Psoas muscle (tissue), 8 donors: ENCODE measurements at regions of chr1 and their contacts with region 1.

Region 1: GRCh38 chr1:54406339-54407153 is at the start of gene SSBP3:
- DNase-seq: peak; percentile 93 to 96
- ATAC-seq: peak; percentile 84 to 88 (median 86)
- H3K4me3 ChIP-seq: peak within 1 kb of the TSS; percentile 91
- H3K27ac ChIP-seq: peak within 1 kb of the TSS; percentile 89
- H3K4me1 ChIP-seq: peaks cover 54% of the 10 kb centered on the region
- H3K27me3 ChIP-seq: no peaks in the 10 kb centered on the region
- CTCF ChIP-seq: no peak
- total RNA-seq, gene SSBP3: 13.8 to 24.2 (median 22.0) TPM

Region 2: DNA sequence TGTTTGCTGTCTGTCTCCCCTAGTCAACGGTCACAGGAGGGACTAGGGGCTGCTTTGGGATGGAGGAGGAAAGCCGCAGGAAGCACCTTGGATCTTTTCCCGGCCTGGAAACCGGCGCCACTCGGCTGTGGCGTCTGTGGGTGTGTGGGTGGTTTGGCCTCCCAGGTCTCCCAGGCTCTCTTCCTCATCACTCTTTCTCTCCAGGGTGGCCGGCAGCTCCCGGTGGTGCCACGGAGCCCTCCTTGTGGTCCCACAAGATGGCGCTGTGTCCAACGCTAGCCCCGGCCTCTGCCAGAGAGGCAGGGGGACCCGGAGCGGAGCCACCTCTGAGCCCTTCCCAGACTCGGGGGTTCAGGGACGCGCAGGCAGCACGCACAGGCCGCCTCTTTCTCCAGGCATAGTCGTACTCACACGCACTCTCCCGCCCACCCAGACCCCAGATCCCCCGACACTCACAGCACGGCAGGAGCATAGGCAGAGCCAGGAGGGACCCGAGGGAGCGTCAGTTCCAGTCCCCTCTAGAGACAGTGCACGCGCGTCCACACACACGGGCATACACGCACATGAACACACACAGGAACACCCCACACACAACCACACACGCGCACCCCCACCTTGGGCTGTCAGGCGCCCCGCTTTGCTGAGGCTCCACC is 284.9 kb before region 1 on chr1:
- intact Hi-C with region 1: loop called (anchors 5 kb)
- DNase-seq: peak; percentile 77 to 89
- ATAC-seq: peak; percentile 71 to 85 (median 76)
- H3K4me3 ChIP-seq: peak overlapping the region; percentile 57
- H3K27ac ChIP-seq: no peak overlapping the region
- H3K4me1 ChIP-seq: peaks cover 9% of the 10 kb centered on the region
- H3K27me3 ChIP-seq: no peaks in the 10 kb centered on the region
- CTCF ChIP-seq: peak; percentile 76

Region 3: GRCh38 chr1:54199765-54200518 is 206.6 kb before region 1 on chr1 and contains the starts of genes CYB5RL and MRPL37:
- intact Hi-C with region 1: loop called in 1 of 2 experiments (anchors 5 kb)
- DNase-seq: peak; percentile 88 to 93
- ATAC-seq: peak; percentile 96 to 100 (median 99)
- H3K4me3 ChIP-seq: peak within 1 kb of the TSS; percentile 79
- H3K27ac ChIP-seq: peak within 1 kb of the TSS; percentile 80
- H3K4me1 ChIP-seq: peaks cover 20% of the 10 kb centered on the region
- H3K27me3 ChIP-seq: no peaks in the 10 kb centered on the region
- CTCF ChIP-seq: no peak
- total RNA-seq, gene CYB5RL: 2.8 to 6.4 (median 3.3) TPM
- total RNA-seq, gene MRPL37: 89.6 to 109 (median 102) TPM

Region 4: DNA sequence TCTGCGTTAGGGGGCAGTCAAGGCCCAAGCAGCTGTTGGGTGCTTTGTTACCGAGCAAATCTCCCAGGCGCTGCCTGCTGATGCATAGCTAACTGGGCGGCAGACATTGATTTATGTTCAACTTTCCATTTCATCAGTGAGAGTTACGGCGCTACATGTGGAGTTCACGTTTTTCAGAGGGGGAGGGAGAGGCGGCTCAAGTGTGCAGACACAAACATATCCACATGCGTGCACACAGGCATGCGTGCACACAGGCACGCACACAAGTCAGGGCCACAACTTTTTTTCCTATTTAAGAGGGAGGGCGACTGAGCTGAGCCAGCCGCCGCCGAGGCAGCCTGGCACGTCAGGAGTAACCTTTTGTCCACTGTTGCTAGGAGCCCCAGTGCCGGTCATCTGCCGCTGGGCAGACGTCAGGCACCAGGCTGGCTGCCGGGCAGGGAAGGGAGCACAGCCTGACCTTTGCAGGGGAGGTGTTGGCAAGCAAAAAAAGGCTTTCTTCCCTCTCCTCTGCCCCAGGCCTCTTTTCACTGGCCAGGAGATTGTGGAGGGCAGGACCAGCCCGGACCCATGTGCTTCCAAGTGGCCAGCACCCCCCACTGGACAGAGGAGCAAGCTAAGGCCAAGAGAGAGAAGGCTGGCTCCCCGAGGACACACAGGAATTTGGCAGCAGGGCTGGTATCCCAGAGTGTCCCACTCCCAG is 133.3 kb before region 1 on chr1:
- intact Hi-C with region 1: loop called (anchors 2 to 5 kb)
- DNase-seq: peak; percentile 78 to 91
- ATAC-seq: peak; percentile 87 to 89 (median 88)
- H3K4me3 ChIP-seq: peak overlapping the region; percentile 56
- H3K27ac ChIP-seq: peak overlapping the region; percentile 87
- H3K4me1 ChIP-seq: peaks cover 84% of the 10 kb centered on the region
- H3K27me3 ChIP-seq: no peaks in the 10 kb centered on the region
- CTCF ChIP-seq: peak; percentile 57

Region 5: GRCh38 chr1:54310439-54311328 is 95.9 kb before region 1 on chr1:
- intact Hi-C with region 1: loop called in 1 of 2 experiments (anchors 5 kb)
- DNase-seq: peak in 1 of 2 donors; percentile 74
- ATAC-seq: peak; percentile 55 to 77 (median 70)
- H3K4me3 ChIP-seq: no peak overlapping the region
- H3K27ac ChIP-seq: peak overlapping the region; percentile 53
- H3K4me1 ChIP-seq: peaks cover 58% of the 10 kb centered on the region
- H3K27me3 ChIP-seq: no peaks in the 10 kb centered on the region
- CTCF ChIP-seq: peak; percentile 51

Region 6: DNA sequence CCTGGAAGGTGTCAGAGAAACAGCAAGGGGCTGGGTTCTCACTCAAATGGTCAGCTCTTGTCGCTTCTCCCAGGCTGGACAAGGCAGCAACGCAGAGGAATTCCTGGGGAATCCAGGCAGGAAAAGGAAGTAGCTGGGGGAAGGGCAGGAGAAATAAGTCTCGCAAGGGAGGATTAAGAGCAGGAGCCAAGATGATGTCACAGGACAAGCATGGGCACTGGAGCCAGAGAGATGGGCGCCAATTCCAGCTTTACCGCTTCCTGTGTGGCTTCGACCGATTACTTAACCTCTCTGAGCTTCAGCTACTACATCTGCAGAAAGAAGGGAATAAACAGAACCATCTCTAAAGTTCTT is 70.8 kb before region 1 on chr1:
- intact Hi-C with region 1: loop called in 1 of 2 experiments (anchors 5 kb)
- DNase-seq: peak; percentile 67 to 84
- ATAC-seq: peak; percentile 74 to 80 (median 76)
- H3K4me3 ChIP-seq: peak overlapping the region; percentile 55
- H3K27ac ChIP-seq: peak overlapping the region; percentile 93
- H3K4me1 ChIP-seq: peaks cover 86% of the 10 kb centered on the region
- H3K27me3 ChIP-seq: no peaks in the 10 kb centered on the region
- CTCF ChIP-seq: no peak

Region 7: GRCh38 chr1:54488779-54489626 is 82.5 kb after region 1 on chr1:
- intact Hi-C with region 1: loop called (anchors 1 kb)
- DNase-seq: peak; percentile 78 to 89
- ATAC-seq: peak; percentile 79 to 83 (median 82)
- H3K4me3 ChIP-seq: peak overlapping the region; percentile 81
- H3K27ac ChIP-seq: peak overlapping the region; percentile 87
- H3K4me1 ChIP-seq: peaks cover 27% of the 10 kb centered on the region
- H3K27me3 ChIP-seq: no peaks in the 10 kb centered on the region
- CTCF ChIP-seq: peak; percentile 96